A673 (cell line): ENCODE measurements at regions of chr12 and their contacts with region 1.

Region 1: GRCh38 chr12:96510306-96510764 is 21.0 kb downstream of the CFAP54 start:
- DNase-seq: no peak
- H3K4me3 ChIP-seq: no peak overlapping the region
- H3K27ac ChIP-seq: no peak overlapping the region
- H3K4me1 ChIP-seq: no peaks in the 10 kb centered on the region
- H3K27me3 ChIP-seq: no peaks in the 10 kb centered on the region
- CTCF ChIP-seq: no peak

Region 2: DNA sequence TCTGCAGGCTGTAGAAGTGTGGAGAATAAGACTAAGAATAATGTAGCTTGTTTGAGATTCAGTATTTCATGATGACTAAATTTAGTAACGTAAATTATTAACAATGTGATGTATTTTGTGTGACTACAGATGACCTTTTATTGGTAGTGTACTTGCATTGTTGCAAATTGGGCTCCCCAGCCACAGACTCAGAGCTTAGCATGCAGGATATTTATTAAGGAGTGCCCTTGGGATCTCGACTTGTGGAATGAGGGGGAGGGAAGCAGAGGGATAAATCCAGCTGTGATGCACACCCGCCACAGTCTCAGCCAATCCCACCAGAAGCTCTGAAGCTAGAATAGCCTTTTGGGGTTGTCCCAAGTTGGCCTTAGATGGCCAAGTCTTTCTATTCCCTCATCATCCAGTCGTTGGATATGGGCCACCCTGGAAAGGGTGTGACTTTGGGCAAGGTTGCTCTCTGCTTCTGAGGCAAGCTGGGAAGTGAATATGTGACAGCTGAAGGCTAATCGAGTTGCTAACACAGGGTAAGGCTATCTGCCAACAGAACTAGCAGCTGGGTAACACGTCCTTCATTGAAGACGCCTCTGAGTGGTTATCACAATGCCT is 917.0 kb before region 1 on chr12:
- CTCF ChIA-PET with region 1: interaction called, 10 read pairs
- POLR2A ChIA-PET with region 1: no interaction called
- intact Hi-C with region 1: loop called (anchors 10 kb)
- DNase-seq: no peak
- H3K4me3 ChIP-seq: no peak overlapping the region
- H3K27ac ChIP-seq: no peak overlapping the region
- H3K4me1 ChIP-seq: no peaks in the 10 kb centered on the region
- H3K27me3 ChIP-seq: no peaks in the 10 kb centered on the region
- CTCF ChIP-seq: no peak

Region 3: GRCh38 chr12:96327346-96327745 is 183.0 kb before region 1 on chr12:
- CTCF ChIA-PET with region 1: no interaction called
- POLR2A ChIA-PET with region 1: no interaction called
- intact Hi-C with region 1: no loop called
- DNase-seq: no peak
- H3K4me3 ChIP-seq: no peak overlapping the region
- H3K27ac ChIP-seq: no peak overlapping the region
- H3K4me1 ChIP-seq: no peaks in the 10 kb centered on the region
- H3K27me3 ChIP-seq: no peaks in the 10 kb centered on the region
- CTCF ChIP-seq: no peak

Region 4: DNA sequence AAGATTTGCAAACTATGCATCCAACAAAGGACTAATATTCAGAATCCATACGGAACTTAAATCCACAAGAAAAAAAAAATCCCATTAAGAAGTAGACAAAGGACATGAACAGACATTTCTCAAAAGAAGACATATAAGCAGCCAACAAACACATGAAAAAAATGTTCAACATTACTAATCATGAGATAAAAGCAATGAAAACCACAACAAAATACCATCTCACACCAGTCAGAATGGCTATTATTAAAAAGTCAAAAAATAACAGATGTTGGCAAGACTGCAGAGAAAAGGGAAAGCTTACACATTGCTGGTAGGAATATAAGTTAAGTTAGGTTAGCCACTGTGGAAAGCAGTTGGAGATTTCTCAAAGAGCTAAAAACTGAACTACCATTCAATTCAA is 126.3 kb before region 1 on chr12:
- CTCF ChIA-PET with region 1: no interaction called
- POLR2A ChIA-PET with region 1: no interaction called
- intact Hi-C with region 1: no loop called
- DNase-seq: no peak
- H3K4me3 ChIP-seq: no peak overlapping the region
- H3K27ac ChIP-seq: no peak overlapping the region
- H3K4me1 ChIP-seq: no peaks in the 10 kb centered on the region
- H3K27me3 ChIP-seq: no peaks in the 10 kb centered on the region
- CTCF ChIP-seq: no peak